AG04449 (cell line): ENCODE measurements at regions of chr12 and their contacts with region 1.

Region 1: GRCh38 chr12:2034633-2035430 is 18.0 kb upstream of the CACNA1C start:
- DNase-seq: no peak
- H3K4me3 ChIP-seq: peak overlapping the region; percentile 47
- CTCF ChIP-seq: peak; percentile 92

Region 2: GRCh38 chr12:2009623-2010022 is 25.2 kb before region 1 on chr12:
- CTCF ChIA-PET with region 1: interaction called, 50 read pairs
- POLR2A ChIA-PET with region 1: no interaction called
- DNase-seq: no peak
- H3K4me3 ChIP-seq: no peak overlapping the region
- CTCF ChIP-seq: no peak

Region 3: GRCh38 chr12:2023365-2023764 is 11.5 kb before region 1 on chr12:
- CTCF ChIA-PET with region 1: interaction called, 57 read pairs
- POLR2A ChIA-PET with region 1: no interaction called
- DNase-seq: no peak
- H3K4me3 ChIP-seq: no peak overlapping the region
- CTCF ChIP-seq: no peak

Region 4: GRCh38 chr12:2284857-2285256 is 250.0 kb after region 1 on chr12:
- CTCF ChIA-PET with region 1: interaction called, 10 read pairs
- POLR2A ChIA-PET with region 1: no interaction called
- DNase-seq: no peak
- H3K4me3 ChIP-seq: peak overlapping the region; percentile 24
- CTCF ChIP-seq: peak; percentile 87